Common myeloid progenitor, CD34-positive (primary cell): ENCODE measurements at regions of chr2 and their contacts with region 1.

Region 1: GRCh38 chr2:28594289-28595108 is 98.6 kb downstream of the PLB1 start:
- DNase-seq: peak; percentile 89 to 91 (median 90)
- H3K4me3 ChIP-seq: peak overlapping the region in 3 of 7 experiments; percentile 19 to 29 (median 25)
- H3K27ac ChIP-seq: no peak overlapping the region
- H3K4me1 ChIP-seq: peaks cover 0 to 9% (median 8%) of the 10 kb centered on the region in 4 experiments
- H3K27me3 ChIP-seq: no peaks in the 10 kb centered on the region

Region 2: GRCh38 chr2:28495551-28496250 is 98.8 kb before region 1 on chr2 and contains the start of gene PLB1:
- CTCF ChIA-PET with region 1: no interaction called
- POLR2A ChIA-PET with region 1: no interaction called
- DNase-seq: no peak
- H3K4me3 ChIP-seq: peak within 1 kb of the TSS in 1 of 7 experiments; percentile 2
- H3K27ac ChIP-seq: no peak within 1 kb of the TSS
- H3K4me1 ChIP-seq: no peaks in the 10 kb centered on the region
- H3K27me3 ChIP-seq: peaks cover 0 to 2% (median 0%) of the 10 kb centered on the region in 5 experiments

Region 3: DNA sequence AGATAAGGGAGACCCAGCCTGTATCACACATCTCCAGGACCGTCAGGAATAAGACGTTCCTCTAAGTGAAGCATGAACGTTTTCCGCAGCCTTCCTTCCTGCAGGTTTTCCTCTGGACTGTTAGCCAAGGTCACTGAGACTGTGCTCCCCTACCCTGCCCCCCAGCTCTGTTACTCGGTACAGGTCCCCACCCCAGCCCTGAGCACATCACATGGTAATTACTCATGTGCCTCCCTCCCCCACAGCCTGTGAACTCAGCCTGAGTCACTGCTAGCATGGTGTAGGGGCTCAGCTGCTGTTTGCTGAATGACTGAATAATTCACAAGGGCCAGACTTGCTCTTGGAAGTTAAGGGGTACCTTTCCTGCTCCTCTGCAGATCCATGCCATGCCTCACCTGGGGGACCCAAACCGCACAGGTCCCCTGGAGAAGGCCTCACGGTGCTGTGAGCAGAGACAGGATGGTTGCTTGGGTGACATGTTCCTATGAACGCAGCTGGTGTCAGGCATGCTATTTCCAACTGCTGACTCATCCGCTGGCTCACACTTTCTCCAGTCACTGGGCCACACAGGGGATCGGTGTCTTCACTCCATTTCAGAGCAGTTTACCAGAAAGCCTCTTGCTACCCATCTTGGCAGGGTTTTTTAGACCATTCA is 10.5 kb before region 1 on chr2:
- CTCF ChIA-PET with region 1: interaction called, 22 read pairs
- POLR2A ChIA-PET with region 1: interaction called, 4 read pairs
- DNase-seq: peak; percentile 56 to 89 (median 84)
- H3K4me3 ChIP-seq: no peak overlapping the region
- H3K27ac ChIP-seq: peak overlapping the region in 1 of 2 experiments; percentile 41
- H3K4me1 ChIP-seq: peaks cover 0 to 35% (median 8%) of the 10 kb centered on the region in 4 experiments
- H3K27me3 ChIP-seq: no peaks in the 10 kb centered on the region

Region 4: DNA sequence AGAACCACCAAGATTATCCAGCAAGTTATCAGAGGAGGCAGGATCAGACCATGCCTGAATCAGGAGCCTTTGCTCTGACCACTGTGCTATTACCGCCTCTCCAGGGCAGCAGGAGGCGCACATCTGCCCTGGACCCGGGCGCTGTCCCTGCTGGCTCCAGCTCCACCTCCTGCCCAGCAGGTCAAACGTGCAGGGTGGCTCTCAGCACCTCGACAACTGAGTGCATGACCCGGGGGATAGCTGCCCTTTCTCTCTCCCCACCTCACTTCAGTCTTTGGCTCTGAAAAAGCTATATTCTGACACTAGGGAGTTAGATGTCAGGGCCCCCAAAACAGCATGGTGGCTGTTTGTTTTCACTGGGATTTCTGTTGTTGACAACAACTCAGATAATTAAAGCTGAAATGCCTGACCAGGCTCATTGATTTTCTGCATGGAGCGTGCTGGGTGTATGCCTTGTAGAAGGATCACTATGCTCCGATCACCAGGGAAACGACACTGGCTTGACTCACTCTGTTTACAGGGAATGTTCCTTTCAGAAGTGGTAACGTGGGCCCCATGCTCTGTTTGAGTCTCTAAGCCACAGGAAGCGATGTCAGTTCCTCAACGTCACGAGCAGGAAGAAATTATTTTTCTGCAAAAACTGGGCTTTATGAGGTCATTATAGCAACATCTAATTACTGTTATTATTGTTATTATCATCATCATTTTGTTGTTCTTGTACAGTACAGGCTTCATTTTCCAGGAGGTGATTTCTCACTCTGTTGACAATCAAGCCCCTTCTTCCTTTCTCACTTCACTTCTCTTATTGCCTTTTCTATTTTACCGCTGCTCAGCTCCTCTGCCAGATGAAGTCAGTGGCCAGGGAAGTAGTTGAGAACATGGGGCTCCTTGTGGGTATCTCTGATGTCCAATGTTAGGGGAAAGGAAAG is 26.9 kb after region 1 on chr2:
- CTCF ChIA-PET with region 1: interaction called, 34 read pairs
- POLR2A ChIA-PET with region 1: interaction called, 5 read pairs
- DNase-seq: peak; percentile 96 to 97 (median 97)
- H3K4me3 ChIP-seq: peak overlapping the region in 4 of 7 experiments; percentile 14 to 54 (median 34)
- H3K27ac ChIP-seq: peak overlapping the region; percentile 96 to 98
- H3K4me1 ChIP-seq: peaks cover 22 to 77% (median 52%) of the 10 kb centered on the region in 4 experiments
- H3K27me3 ChIP-seq: no peaks in the 10 kb centered on the region

Region 5: GRCh38 chr2:28764909-28765711 is 170.6 kb after region 1 on chr2:
- CTCF ChIA-PET with region 1: interaction called, 34 read pairs
- POLR2A ChIA-PET with region 1: no interaction called
- DNase-seq: no peak
- H3K4me3 ChIP-seq: no peak overlapping the region
- H3K27ac ChIP-seq: no peak overlapping the region
- H3K4me1 ChIP-seq: peaks cover 0 to 13% (median 4%) of the 10 kb centered on the region in 4 experiments
- H3K27me3 ChIP-seq: no peaks in the 10 kb centered on the region